Stomach (tissue), 19 donors: ENCODE measurements at regions of chr4 and their contacts with region 1.

Region 1: DNA sequence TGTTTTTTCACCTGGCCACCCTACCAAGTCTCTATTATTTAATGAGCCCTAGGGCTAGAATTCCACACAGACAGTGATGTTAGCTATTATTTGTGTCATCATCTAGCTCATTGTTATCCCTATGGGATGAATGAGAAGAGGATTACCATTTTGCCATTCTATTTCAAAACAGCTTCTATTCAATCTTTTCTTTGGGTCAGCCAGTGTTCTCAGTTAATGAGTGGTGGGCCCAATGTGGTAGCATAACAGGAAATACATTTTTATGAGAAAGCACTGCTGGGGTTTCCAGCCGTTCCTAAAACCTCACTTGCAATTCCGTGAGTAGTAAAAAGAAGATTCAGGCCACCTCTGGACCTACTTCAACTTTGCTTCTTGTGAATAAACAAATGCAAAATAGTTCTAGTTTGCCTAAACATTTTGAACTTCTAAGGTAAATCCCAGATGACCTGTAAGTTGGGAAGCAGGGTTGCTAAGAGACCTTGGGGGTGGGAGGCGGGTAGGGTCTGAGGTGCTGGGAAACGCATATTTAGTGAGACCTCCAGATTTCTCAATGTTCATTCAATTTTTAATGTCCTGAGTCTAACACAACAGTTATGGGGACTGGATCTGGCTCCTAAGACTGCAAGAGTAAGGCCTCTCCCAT is 24.8 kb upstream of the CYP2U1 start:
- DNase-seq: no peak
- H3K4me3 ChIP-seq: no peak overlapping the region
- H3K27ac ChIP-seq: no peak overlapping the region
- H3K4me1 ChIP-seq: peaks cover 0 to 2% (median 0%) of the 10 kb centered on the region in 4 donors
- H3K27me3 ChIP-seq: no peaks in the 10 kb centered on the region
- CTCF ChIP-seq: no peak
- EP300 ChIP-seq: no peak
- POLR2A ChIP-seq: no peak

Region 2: DNA sequence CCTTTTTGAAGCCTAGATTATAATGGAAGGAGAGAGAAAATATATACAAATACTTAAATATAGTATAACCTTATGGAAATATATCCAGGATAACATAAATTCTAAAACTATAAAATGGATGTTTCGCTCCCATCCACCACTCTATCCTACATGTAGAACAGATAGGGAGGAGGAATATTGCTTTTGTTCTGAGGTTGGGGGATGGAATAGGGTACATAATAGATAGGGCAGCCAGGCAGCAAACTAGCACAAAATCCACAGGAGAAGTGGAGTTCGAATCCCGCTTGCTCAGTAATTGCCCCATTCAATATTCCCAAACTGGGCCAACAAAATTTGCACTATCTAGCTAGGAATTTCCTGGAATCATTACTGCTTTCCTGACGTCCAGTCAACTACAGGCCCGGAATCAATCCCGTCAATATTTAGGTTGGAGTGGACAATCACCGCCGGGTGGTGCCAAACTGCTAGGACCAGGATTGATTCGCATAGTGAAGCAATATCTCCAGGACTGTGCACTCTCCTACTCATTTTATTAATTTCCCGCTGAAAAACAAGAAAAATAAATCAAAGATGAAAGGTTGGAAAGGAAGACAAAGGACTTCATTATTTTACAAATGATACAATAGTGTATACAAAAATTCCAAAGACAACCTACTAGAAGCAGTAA is 146.2 kb before region 1 on chr4:
- intact Hi-C with region 1: loop called (anchors 5 kb)
- DNase-seq: peak; percentile 26 to 68
- H3K4me3 ChIP-seq: no peak overlapping the region
- H3K27ac ChIP-seq: no peak overlapping the region
- H3K4me1 ChIP-seq: peaks cover 0 to 4% (median 0%) of the 10 kb centered on the region in 4 donors
- H3K27me3 ChIP-seq: no peaks in the 10 kb centered on the region
- CTCF ChIP-seq: peak in 4 of 7 experiments; percentile 15 to 55 (median 38)
- EP300 ChIP-seq: no peak
- POLR2A ChIP-seq: no peak

Region 3: GRCh38 chr4:108849611-108850168 is 943.1 kb after region 1 on chr4:
- intact Hi-C with region 1: no loop called
- DNase-seq: peak in 1 of 2 donors; percentile 34
- H3K4me3 ChIP-seq: no peak overlapping the region
- H3K27ac ChIP-seq: no peak overlapping the region
- H3K4me1 ChIP-seq: no peaks in the 10 kb centered on the region
- H3K27me3 ChIP-seq: no peaks in the 10 kb centered on the region
- CTCF ChIP-seq: no peak
- EP300 ChIP-seq: no peak
- POLR2A ChIP-seq: no peak